Ascending aorta (tissue), 2 donors: ENCODE measurements at regions of chr4 and their contacts with region 1.

Region 1: DNA sequence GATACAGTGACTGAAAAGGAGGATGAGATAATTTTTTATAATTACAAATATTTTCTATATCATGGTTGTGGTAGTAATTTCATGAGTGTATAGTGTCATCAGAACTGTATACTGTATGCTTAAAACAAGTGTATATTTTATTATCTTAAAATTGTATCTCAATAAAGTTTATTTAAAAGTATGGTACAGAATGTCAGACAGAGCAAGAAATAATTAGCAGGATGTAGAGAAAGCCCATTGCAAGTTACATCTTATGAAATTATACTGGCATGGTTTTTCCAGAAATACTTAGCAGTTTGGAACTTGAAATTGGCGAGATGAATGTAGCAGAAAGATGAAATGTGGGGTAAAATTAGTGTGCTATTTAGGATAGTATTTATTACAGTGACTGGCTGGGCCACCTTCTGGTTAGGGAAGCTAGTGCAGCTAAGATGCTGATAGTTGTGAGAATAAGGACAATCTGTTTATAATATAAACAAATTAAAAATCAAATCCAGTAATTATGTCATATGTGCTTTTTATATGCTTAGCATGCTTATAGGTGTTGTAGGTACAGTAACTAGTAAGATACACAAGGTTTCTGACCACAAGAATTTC is 74.7 kb downstream of the IL15 start:
- DNase-seq: no peak
- H3K4me3 ChIP-seq: no peak overlapping the region
- H3K27ac ChIP-seq: no peak overlapping the region
- H3K4me1 ChIP-seq: no peaks in the 10 kb centered on the region
- H3K27me3 ChIP-seq: no peaks in the 10 kb centered on the region
- CTCF ChIP-seq: peak; percentile 38 to 65 (median 48)

Region 2: GRCh38 chr4:141169391-141169790 is 541.7 kb before region 1 on chr4:
- intact Hi-C with region 1: loop called (anchors 10 kb)
- DNase-seq: no peak
- H3K4me3 ChIP-seq: no peak overlapping the region
- H3K27ac ChIP-seq: no peak overlapping the region
- H3K4me1 ChIP-seq: no peaks in the 10 kb centered on the region
- H3K27me3 ChIP-seq: no peaks in the 10 kb centered on the region
- CTCF ChIP-seq: no peak

Region 3: DNA sequence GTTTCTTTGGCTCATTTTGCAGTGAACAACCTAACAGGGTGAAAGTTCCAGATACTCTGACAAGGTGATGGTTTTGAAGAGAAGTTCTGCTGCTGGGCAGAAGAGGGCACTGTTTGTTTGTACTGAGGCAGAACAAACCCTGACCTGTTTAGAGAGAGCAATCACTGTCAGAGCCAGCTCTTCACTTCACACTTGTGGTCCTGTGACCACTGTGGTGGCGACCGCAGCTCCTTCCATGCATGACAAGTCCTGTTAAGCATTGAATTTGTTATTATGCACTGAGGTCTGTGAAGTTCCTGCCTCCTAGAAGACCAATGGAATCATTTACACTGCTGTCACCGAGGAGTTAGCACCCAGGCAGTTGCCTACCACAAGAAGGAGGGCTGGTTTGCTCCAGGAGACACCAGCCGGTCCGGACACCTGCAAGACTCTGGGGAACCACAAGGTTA is 403.8 kb before region 1 on chr4:
- intact Hi-C with region 1: loop called (anchors 2 kb)
- DNase-seq: peak in 1 of 2 donors; percentile 67
- H3K4me3 ChIP-seq: no peak overlapping the region
- H3K27ac ChIP-seq: no peak overlapping the region
- H3K4me1 ChIP-seq: no peaks in the 10 kb centered on the region
- H3K27me3 ChIP-seq: no peaks in the 10 kb centered on the region
- CTCF ChIP-seq: peak; percentile 42 to 73 (median 72)

Region 4: DNA sequence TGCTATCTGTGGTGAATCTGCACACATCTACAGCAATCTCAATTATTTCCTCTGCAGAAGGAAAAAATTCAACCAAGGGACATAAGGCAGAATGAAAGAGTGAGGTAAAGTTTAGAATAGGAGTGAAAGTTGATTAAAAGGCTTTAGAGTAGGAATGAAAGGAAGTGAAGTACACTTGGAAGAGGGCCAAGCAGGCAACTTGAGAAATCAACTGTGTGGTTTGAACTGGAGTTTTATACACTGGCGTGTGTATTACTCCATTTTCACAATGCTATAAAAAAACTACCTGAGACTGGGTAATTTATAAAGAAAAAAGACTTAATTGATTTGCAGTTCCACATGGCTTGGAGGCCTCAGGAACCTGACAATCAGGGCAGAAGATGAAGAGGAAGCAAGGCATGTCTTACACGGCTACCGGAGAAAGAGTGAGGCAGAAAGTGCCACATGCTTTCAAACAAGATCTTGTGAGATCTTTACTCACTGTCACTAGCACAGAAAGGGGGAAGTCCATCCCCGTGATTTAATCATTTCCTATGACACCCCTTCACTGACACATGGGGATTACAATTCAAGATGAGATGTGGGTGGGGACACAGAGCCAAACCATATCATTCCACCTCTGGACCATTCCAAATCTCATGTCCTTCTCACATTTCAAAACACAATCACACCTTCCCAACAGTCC is 160.1 kb after region 1 on chr4:
- intact Hi-C with region 1: no loop called
- DNase-seq: no peak
- H3K4me3 ChIP-seq: no peak overlapping the region
- H3K27ac ChIP-seq: no peak overlapping the region
- H3K4me1 ChIP-seq: no peaks in the 10 kb centered on the region
- H3K27me3 ChIP-seq: no peaks in the 10 kb centered on the region
- CTCF ChIP-seq: no peak